ENCODE measurements at regions of chr1 and their contacts with region 1.

Region 1: GRCh38 chr1:201348211-201348566 is 29.3 kb downstream of the TNNT2 start:
- DNase-seq: no peak
- ATAC-seq: peak; percentile 60 to 71 (median 70)
- H3K4me3 ChIP-seq: no peak overlapping the region
- H3K27ac ChIP-seq: no peak overlapping the region
- H3K4me1 ChIP-seq: no peaks in the 10 kb centered on the region
- H3K27me3 ChIP-seq: no peaks in the 10 kb centered on the region
- CTCF ChIP-seq: peak; percentile 35

Region 2: DNA sequence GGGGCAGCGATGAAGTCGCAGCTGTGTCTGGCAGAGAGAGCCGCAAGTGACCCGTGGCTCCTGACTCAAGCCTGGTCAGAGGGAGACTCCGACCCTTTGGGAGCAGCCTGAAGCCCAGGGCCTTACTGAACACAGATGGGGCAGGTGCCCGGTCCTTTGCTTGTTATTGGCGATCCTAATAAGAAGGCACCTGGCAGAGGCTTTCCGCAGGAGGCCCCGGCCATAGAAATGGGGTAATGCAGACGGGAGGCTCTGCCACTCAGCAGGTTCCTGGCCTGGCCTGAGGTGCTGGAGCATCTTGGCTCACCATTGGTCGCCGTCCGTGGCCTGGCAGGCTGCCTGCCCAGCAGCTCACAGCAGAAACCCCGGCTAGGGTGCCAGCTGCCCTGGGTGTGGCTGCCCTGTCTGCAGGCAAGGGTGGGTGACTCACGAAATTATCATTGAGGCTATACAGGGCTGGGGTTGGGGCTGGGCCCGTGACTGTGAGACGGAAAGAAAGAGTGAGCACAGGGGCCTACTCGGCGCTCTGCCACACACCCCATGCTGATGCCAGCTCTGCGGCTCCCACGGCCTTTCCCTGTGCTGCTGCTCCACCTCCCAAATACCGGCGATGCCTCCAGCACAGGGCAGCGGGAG is 73.0 kb before region 1 on chr1:
- intact Hi-C with region 1: loop called in 1 of 2 experiments (anchors 5 kb)
- DNase-seq: peak; percentile 75 to 76
- ATAC-seq: peak; percentile 87 to 95 (median 90)
- H3K4me3 ChIP-seq: no peak overlapping the region
- H3K27ac ChIP-seq: no peak overlapping the region
- H3K4me1 ChIP-seq: no peaks in the 10 kb centered on the region
- H3K27me3 ChIP-seq: peaks cover 0 to 11% (median 0%) of the 10 kb centered on the region in 3 donors
- CTCF ChIP-seq: no peak

Region 3: GRCh38 chr1:201309426-201309825 is 38.8 kb before region 1 on chr1:
- intact Hi-C with region 1: loop called in 1 of 2 experiments (anchors 2 kb)
- DNase-seq: peak; percentile 83 to 92
- ATAC-seq: peak; percentile 84 to 97 (median 95)
- H3K4me3 ChIP-seq: no peak overlapping the region
- H3K27ac ChIP-seq: peak overlapping the region; percentile 61
- H3K4me1 ChIP-seq: peaks cover 6% of the 10 kb centered on the region
- H3K27me3 ChIP-seq: peaks cover 0 to 9% (median 0%) of the 10 kb centered on the region in 3 donors
- CTCF ChIP-seq: no peak

Region 4: GRCh38 chr1:201376464-201377374 is 28.5 kb after region 1 on chr1:
- intact Hi-C with region 1: no loop called
- DNase-seq: no peak
- ATAC-seq: peak in 2 of 4 donors; percentile 15 to 45
- H3K4me3 ChIP-seq: no peak overlapping the region
- H3K27ac ChIP-seq: no peak overlapping the region
- H3K4me1 ChIP-seq: no peaks in the 10 kb centered on the region
- H3K27me3 ChIP-seq: peaks cover 0 to 8% (median 0%) of the 10 kb centered on the region in 3 donors
- CTCF ChIP-seq: no peak

Region 5: GRCh38 chr1:201408176-201408833 is 60.1 kb after region 1 on chr1:
- intact Hi-C with region 1: loop called in 1 of 2 experiments (anchors 2 kb)
- DNase-seq: peak; percentile 82 to 89
- ATAC-seq: peak; percentile 73 to 85 (median 78)
- H3K4me3 ChIP-seq: no peak overlapping the region
- H3K27ac ChIP-seq: peak overlapping the region; percentile 41
- H3K4me1 ChIP-seq: no peaks in the 10 kb centered on the region
- H3K27me3 ChIP-seq: no peaks in the 10 kb centered on the region
- CTCF ChIP-seq: peak; percentile 95